CD4-positive, alpha-beta T cell (primary cell): ENCODE measurements at regions of chr19 and their contacts with region 1.

Region 1: GRCh38 chr19:39328046-39328705 is 7.5 kb upstream of the LRFN1 start:
- DNase-seq: peak; percentile 71 to 89 (median 80)
- ATAC-seq: peak; percentile 82
- H3K4me3 ChIP-seq: no peak overlapping the region
- H3K4me3 Mint-ChIP-seq: peak overlapping the region; percentile 68
- H3K27ac ChIP-seq: no peak overlapping the region
- H3K27ac Mint-ChIP-seq: peak overlapping the region; percentile 83
- H3K4me1 ChIP-seq: peaks cover 63% of the 10 kb centered on the region
- H3K4me1 Mint-ChIP-seq: peaks cover 33% of the 10 kb centered on the region
- H3K27me3 ChIP-seq: no peaks in the 10 kb centered on the region
- H3K27me3 Mint-ChIP-seq: no peaks in the 10 kb centered on the region
- CTCF ChIP-seq: peak; percentile 98

Region 2: DNA sequence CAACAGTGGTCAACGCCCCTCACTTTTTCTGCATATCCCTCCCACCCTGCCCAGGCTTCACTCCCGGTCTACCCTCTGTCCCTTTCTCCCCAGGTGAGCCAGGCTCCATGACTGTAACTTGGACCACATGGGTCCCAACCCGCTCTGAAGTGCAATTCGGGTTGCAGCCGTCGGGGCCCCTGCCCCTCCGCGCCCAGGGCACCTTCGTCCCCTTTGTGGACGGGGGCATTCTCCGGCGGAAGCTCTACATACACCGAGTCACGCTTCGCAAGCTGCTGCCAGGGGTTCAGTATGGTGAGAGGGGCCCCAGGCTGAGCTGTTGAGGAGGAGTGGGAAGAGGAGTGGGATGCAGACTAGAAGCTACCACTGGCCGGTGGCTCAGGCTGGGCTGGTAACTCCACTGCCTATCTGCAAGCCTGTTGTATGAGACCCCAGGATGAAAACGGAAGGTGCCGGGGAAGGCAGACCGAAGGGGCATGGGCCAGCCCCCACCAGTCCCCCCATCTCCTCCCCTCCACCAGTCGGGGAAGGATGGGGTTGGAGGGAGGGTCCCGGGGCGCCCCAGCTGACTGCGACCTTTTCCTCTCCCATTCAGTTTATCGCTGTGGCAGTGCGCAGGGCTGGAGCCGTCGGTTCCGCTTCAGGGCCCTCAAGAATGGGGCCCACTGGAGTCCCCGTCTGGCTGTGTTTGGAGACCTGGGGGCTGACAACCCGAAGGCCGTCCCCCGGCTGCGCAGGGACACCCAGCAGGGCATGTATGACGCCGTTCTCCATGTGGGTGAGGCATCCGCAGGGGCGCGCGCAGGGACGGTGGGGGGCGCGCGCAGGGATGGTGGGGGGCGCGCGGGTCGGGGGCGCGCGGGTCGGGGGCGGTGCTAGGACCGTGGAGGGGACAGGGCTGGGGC is 229.6 kb before region 1 on chr19:
- CTCF ChIA-PET with region 1: no interaction called
- POLR2A ChIA-PET with region 1: no interaction called
- intact Hi-C with region 1: no loop called
- DNase-seq: no peak
- ATAC-seq: no peak
- H3K4me3 ChIP-seq: no peak overlapping the region
- H3K4me3 Mint-ChIP-seq: no peak overlapping the region
- H3K27ac ChIP-seq: no peak overlapping the region
- H3K27ac Mint-ChIP-seq: no peak overlapping the region
- H3K4me1 ChIP-seq: peaks cover 2% of the 10 kb centered on the region
- H3K4me1 Mint-ChIP-seq: no peaks in the 10 kb centered on the region
- H3K27me3 ChIP-seq: peaks cover 12 to 13% of the 10 kb centered on the region in 2 experiments
- H3K27me3 Mint-ChIP-seq: peaks cover 58% of the 10 kb centered on the region
- CTCF ChIP-seq: no peak

Region 3: DNA sequence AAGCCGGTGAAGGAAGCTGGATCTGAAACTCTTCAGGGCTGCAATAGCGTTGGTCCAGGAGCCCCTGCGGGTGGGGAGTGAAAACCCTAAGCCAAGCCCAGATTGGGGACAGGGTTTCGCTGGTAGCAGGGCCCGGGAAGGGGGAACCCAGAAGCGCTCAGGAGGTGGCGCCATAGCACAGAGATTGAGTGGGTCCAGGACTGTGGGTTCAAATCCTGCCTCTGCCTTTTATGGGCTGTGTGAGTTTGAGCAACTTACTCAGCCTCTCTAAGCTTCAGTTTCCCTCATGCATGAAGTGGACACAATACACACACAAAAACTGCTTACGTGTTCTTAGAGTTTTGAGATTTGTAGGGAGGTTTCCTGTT is 115.8 kb before region 1 on chr19:
- CTCF ChIA-PET with region 1: no interaction called
- POLR2A ChIA-PET with region 1: interaction called, 3 read pairs
- intact Hi-C with region 1: loop called (anchors 1 kb)
- DNase-seq: peak; percentile 30 to 73 (median 50)
- ATAC-seq: peak; percentile 76
- H3K4me3 ChIP-seq: no peak overlapping the region
- H3K4me3 Mint-ChIP-seq: no peak overlapping the region
- H3K27ac ChIP-seq: no peak overlapping the region
- H3K27ac Mint-ChIP-seq: no peak overlapping the region
- H3K4me1 ChIP-seq: peaks cover 5% of the 10 kb centered on the region
- H3K4me1 Mint-ChIP-seq: no peaks in the 10 kb centered on the region
- H3K27me3 ChIP-seq: no peaks in the 10 kb centered on the region
- H3K27me3 Mint-ChIP-seq: peaks cover 5% of the 10 kb centered on the region
- CTCF ChIP-seq: peak; percentile 47